ENCODE measurements at regions of chr7 and their contacts with region 1.

Region 1: DNA sequence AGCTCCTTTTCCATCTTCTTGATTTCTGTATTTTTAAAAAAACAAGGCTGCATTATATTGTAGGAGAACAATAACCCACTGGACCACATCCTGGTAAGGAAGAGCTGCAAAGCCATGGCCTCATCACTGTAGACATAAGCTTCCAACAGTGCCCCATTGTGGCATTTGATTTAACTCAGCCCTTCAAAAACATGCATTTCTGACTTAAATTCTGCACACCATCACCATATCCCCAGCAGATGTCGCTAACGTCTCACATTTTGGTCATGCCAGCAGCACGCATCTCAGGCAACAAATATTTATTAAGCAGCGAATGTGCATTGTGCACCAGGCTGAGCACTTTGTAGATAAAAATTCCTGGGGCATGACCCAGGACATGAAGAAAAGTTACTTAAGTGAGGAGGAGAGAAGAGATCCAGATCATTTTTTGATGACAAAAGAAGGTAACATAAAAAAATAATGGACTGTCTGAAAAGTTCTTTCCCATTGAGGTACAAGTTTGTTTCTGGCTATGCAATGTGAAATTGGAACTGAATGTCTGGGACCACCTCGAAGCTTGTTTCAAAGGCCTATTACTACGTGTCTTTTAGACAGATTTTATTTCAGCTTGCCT is 164.6 kb upstream of the CDCA7L start:
- DNase-seq: peak; percentile 30 to 95 (median 86)

Region 2: DNA sequence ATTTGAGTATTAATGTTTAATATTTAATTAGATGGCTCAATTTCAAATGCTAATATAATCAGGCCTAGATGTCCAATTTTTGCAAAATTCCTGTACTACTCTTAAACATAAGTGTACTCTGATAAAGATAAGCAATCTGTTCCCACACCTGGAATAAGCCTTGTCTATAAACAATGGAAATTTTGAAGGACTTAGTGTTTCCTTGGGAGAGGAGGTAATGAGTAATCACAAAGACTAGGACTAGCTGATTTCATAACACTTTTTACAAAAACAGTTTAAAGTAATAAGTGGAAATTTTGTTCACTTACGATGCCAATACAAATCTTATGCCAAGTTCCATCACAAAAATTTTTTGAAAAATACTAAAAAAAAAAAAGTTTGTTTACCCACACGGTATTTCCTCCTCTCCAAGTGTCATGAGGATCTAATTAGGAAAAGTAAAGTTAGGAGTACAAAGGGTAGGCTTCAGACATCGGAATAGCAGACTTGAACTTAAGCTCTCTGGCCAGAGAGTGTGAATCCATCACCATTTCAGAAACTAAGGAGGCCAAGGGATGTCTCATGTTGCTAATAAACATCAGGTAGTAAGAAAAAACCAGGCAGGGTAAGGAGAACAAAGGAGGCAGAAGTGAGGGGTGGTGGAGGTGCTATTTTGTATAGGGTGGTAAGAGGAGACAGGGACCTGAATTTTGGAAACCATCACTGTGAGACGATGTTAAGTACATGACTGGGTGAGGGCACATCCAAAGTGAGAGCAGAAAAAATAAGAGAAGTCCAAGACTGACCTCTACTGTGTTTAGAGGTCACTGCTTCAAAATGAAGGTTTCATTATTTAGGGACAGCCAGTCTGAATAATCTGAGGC is 185.3 kb after region 1 on chr7:
- intact Hi-C with region 1: loop called (anchors 2 kb)
- DNase-seq: peak in 3 of 42 donors; percentile 10 to 63 (median 29)

Measured in head of caudate nucleus (tissue), 42 donors.